Dorsolateral prefrontal cortex (tissue), 120 donors: ENCODE measurements at regions of chr18 and their contacts with region 1.

Region 1: DNA sequence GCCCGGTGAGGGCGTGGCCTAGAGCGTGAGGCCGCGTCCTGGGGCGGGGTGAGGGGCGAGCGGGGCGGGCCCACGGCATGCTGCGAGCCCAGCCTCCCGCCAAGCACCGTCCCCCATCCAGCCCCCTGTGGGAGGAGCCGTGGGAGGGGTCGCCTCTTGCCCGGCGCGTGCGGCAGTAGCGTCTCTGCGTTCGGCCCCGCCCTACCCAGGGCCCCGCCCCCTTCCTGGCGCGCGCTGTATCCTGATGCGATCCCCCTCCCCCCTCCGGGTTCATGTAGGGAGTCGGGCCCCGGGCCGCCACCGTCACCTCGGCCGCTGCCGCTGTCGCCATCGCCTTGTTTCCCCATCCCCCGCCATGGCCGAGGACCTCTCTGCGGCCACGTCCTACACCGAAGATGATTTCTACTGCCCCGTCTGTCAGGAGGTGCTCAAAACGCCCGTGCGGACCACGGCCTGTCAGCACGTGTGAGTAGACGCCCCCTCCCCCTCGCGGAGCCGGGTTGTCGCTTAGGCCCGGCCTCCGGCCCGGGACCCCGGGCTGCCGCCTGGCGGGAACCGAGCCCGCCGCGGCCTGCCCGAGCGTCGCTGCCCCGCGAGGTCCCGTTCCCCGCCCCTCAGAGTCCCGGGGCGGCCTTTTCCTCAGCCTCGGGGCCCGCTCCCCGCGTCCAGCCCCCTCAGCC is 888 bp downstream of the RNF138 start:
- DNase-seq: peak; percentile 92 to 100 (median 99)
- H3K4me3 ChIP-seq: peak overlapping the region; percentile 59 to 98 (median 90)
- H3K27ac ChIP-seq: peak overlapping the region; percentile 67 to 100 (median 99)
- H3K27me3 ChIP-seq: no peaks in the 10 kb centered on the region
- CTCF ChIP-seq: peak in 9 of 56 donors; percentile 9 to 30 (median 15)

Region 2: GRCh38 chr18:31942999-31943865 is 149.3 kb before region 1 on chr18 and contains the start of gene TRAPPC8:
- intact Hi-C with region 1: loop called (anchors 2 to 5 kb)
- DNase-seq: peak; percentile 98 to 100 (median 99)
- H3K4me3 ChIP-seq: peak within 1 kb of the TSS; percentile 64 to 99 (median 89)
- H3K27ac ChIP-seq: peak within 1 kb of the TSS; percentile 60 to 96 (median 88)
- H3K27me3 ChIP-seq: no peaks in the 10 kb centered on the region
- CTCF ChIP-seq: peak in 26 of 56 donors; percentile 3 to 38 (median 17)
- total RNA-seq, gene TRAPPC8: 37.1 to 100 (median 56.5) TPM

Region 3: DNA sequence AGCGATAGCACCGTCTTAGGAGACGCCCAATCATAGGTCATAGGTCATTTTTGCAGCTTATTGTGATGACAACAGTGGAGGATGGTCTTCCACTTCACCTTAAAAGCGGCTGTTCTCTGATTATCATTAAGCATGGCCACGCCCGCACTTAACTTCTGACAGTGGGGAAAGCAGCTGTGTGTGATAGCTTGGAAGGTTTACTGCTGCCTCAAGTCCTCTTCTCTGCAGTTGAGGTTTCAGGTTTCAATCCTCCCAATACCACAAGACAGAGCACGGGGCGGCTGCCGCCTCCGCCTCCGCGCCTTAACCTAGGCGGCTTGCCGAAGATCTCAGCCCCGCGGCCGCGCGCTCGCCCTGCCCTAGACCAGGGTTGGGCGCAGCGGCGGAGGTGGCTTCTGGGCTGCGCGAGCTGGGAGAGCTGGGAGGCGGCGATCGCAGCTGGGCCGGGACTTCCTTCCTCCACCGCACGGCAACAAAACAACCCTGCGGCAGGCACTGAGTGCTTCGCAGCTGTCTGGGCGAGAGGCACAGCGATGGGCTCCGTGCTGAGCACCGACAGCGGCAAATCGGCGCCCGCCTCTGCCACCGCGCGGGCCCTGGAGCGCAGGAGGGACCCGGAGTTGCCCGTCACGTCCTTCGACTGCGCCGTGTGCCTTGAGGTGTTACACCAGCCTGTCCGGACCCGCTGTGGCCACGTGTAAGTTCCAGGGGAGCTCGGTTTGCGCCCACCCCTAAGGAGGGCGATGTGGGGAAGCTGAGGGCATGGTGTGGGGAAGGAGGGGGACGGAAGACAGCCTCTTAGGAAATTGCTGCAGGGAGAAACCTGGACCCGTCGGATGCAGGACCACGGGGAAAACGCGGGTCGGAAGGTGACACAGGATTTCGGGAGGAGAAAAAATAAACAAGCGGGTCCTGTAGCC is 74.0 kb before region 1 on chr18 and contains the start of gene RNF125:
- intact Hi-C with region 1: loop called (anchors 2 kb)
- DNase-seq: peak; percentile 18 to 82 (median 61)
- H3K4me3 ChIP-seq: peak within 1 kb of the TSS; percentile 57 to 89 (median 74)
- H3K27ac ChIP-seq: peak within 1 kb of the TSS; percentile 49 to 96 (median 91)
- H3K27me3 ChIP-seq: no peaks in the 10 kb centered on the region
- CTCF ChIP-seq: peak in 12 of 56 donors; percentile 8 to 24 (median 14)
- total RNA-seq, gene RNF125: 0.69 to 14.6 (median 3.8) TPM

Region 4: GRCh38 chr18:32152705-32153448 is 60.3 kb after region 1 on chr18:
- intact Hi-C with region 1: no loop called
- DNase-seq: no peak
- H3K4me3 ChIP-seq: no peak overlapping the region
- H3K27ac ChIP-seq: no peak overlapping the region
- H3K27me3 ChIP-seq: no peaks in the 10 kb centered on the region
- CTCF ChIP-seq: no peak